Activated naive CD4-positive, alpha-beta T cell treated with anti-CD3 and anti-CD28 coated beads for 36 hours (primary cell): ENCODE measurements at regions of chr1 and their contacts with region 1.

Region 1: DNA sequence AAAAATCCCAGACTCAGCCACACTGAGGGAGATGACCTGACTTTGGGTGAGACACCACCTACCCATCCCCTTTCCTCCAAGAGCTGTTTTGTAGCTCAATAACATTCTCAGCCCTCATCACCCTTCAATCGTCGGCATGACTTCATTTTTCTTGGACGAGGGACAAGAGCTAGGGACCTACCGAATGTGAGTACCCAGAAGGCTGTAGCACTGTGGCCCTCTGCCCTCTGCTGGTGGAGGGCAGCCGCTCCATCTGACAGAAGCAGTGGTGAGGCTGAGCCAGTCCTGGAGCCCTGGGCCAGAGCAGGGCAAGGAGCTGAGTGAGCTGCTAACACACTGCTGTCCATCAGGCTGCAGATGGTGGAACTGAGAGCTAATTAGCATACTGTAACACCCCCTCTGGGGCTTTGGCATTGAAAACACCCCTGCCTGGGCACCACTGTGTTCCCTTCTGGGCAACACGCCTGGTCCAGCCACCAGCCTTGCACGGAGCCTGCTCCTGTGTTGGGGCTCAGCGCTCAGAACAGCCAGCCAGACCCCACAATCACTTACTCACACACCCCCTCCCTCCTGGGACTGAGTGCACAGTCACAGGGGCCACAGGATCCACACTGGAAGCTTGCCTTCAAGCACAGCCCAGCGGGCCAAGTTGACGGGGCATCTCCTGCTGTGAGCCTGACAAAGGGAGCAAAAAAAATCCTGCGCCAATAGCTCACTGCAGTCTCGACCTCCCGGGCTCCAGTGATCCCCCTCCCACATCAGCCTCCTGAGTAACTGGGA is 18.3 kb upstream of the ALPL start:
- DNase-seq: peak; percentile 50
- H3K4me3 Mint-ChIP-seq: no peak overlapping the region
- H3K27ac Mint-ChIP-seq: no peak overlapping the region
- H3K4me1 Mint-ChIP-seq: peaks cover 6% of the 10 kb centered on the region
- H3K27me3 Mint-ChIP-seq: peaks cover 6% of the 10 kb centered on the region

Region 2: GRCh38 chr1:21216835-21217811 is 273.8 kb before region 1 on chr1:
- CTCF ChIA-PET with region 1: interaction called, 3 read pairs
- intact Hi-C with region 1: loop called (anchors 5 kb)
- DNase-seq: peak; percentile 89
- H3K4me3 Mint-ChIP-seq: no peak overlapping the region
- H3K27ac Mint-ChIP-seq: peak overlapping the region; percentile 50
- H3K4me1 Mint-ChIP-seq: peaks cover 7% of the 10 kb centered on the region
- H3K27me3 Mint-ChIP-seq: no peaks in the 10 kb centered on the region

Region 3: DNA sequence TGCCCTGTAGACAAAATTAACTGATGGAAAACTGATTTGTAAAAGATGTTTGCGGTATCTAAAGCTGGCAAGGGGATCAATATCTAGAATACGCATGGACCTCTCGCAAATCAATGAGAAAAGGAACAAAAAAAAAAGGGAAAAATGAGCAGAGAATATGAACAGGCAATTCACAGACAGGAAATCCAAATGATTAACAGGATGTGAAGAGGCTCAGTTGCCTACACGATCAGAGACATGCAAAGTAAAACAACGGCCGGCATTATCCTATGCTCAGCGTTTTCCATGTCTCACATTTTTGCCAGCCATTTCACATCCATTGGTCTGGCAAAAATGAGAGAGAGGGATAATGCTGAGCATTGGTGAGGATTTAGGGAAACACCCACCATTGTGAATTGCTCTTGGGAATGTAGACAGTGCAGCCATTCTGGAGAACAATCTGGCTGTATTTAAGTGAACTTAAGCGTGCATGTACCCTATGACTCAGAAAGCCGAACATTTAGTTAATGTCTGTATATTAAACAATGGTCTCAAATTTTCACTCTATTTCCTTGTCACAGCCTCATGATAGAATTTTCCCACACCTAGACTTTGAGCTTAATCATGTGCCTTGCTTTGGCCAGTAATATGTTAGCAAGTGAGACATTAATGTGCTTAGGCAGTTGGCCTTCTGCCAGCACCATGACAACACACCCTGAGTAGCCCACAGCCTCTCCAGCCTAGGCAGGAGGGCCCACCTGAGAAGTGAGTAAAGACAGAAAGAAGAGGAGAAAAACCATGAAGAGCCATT is 112.1 kb before region 1 on chr1:
- CTCF ChIA-PET with region 1: no interaction called
- intact Hi-C with region 1: loop called (anchors 10 kb)
- DNase-seq: no peak
- H3K4me3 Mint-ChIP-seq: no peak overlapping the region
- H3K27ac Mint-ChIP-seq: no peak overlapping the region
- H3K4me1 Mint-ChIP-seq: no peaks in the 10 kb centered on the region
- H3K27me3 Mint-ChIP-seq: peaks cover 4% of the 10 kb centered on the region